Sigmoid colon (tissue), 7 donors: ENCODE measurements at regions of chr20 and their contacts with region 1.

Region 1: DNA sequence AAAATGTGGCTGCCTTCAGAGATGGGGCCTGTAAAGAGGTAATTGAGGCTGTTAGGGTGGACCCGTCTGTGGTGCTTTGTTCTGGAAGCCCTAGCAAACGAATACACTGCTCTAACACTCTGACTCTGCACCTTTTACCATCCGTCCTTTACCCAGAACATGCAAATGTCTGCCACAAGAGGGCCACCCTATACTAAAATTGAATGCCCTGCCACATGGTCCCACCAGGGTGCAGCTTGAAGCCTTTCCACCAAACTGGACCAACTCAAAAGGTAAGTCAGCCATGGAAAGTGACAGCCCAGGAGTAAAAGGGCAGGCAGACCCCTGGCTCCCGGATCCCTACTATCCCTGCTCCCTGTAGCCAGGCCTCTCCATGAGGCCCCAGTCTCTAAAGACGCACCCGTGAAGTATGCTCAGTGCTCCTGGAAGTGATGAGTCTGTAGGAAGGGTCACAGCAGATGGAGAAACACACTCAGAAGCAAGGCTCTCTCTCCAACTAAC is 5.8 kb upstream of the BFSP1 start:
- DNase-seq: peak; percentile 90
- H3K4me3 ChIP-seq: no peak overlapping the region
- H3K27ac ChIP-seq: peak overlapping the region; percentile 61 to 78 (median 68)
- H3K4me1 ChIP-seq: peaks cover 0 to 60% (median 49%) of the 10 kb centered on the region in 4 donors
- H3K27me3 ChIP-seq: no peaks in the 10 kb centered on the region
- CTCF ChIP-seq: peak; percentile 92 to 99 (median 99)
- EP300 ChIP-seq: no peak
- POLR2A ChIP-seq: no peak

Region 2: GRCh38 chr20:17569616-17570346 is 32.8 kb after region 1 on chr20 and contains the start of gene DSTN:
- intact Hi-C with region 1: loop called (anchors 1 kb)
- DNase-seq: peak; percentile 98
- H3K4me3 ChIP-seq: peak within 1 kb of the TSS; percentile 80 to 100 (median 97)
- H3K27ac ChIP-seq: peak within 1 kb of the TSS; percentile 99 to 100 (median 100)
- H3K4me1 ChIP-seq: peaks cover 3 to 56% (median 48%) of the 10 kb centered on the region in 4 donors
- H3K27me3 ChIP-seq: no peaks in the 10 kb centered on the region
- CTCF ChIP-seq: no peak
- EP300 ChIP-seq: peak in 2 of 4 donors; percentile 56 to 86
- POLR2A ChIP-seq: peak; percentile 98
- total RNA-seq, gene DSTN: 1,872 to 2,237 (median 1,948) TPM

Region 3: GRCh38 chr20:17617551-17618223 is 80.7 kb after region 1 on chr20:
- intact Hi-C with region 1: loop called (anchors 1 kb)
- DNase-seq: peak; percentile 87
- H3K4me3 ChIP-seq: no peak overlapping the region
- H3K27ac ChIP-seq: peak overlapping the region in 2 of 4 donors; percentile 25 to 99
- H3K4me1 ChIP-seq: peaks cover 0 to 47% (median 45%) of the 10 kb centered on the region in 4 donors
- H3K27me3 ChIP-seq: no peaks in the 10 kb centered on the region
- CTCF ChIP-seq: peak; percentile 75 to 97 (median 89)
- EP300 ChIP-seq: no peak
- POLR2A ChIP-seq: no peak